Naive thymus-derived CD8-positive, alpha-beta T cell (primary cell): ENCODE measurements at regions of chr16 and their contacts with region 1.

Region 1: GRCh38 chr16:89115216-89115861 is 21.7 kb downstream of the ACSF3 start:
- DNase-seq: peak; percentile 78 to 97 (median 92)
- ATAC-seq: peak; percentile 89 to 90
- H3K4me3 Mint-ChIP-seq: peak overlapping the region; percentile 77 to 96 (median 87)
- H3K27ac Mint-ChIP-seq: peak overlapping the region; percentile 95 to 100 (median 99)
- H3K4me1 Mint-ChIP-seq: peaks cover 18 to 58% (median 50%) of the 10 kb centered on the region in 4 donors
- H3K27me3 Mint-ChIP-seq: no peaks in the 10 kb centered on the region

Region 2: GRCh38 chr16:89099905-89100304 is 15.4 kb before region 1 on chr16:
- POLR2A ChIA-PET with region 1: interaction called, 51 read pairs
- DNase-seq: peak in 1 of 10 donors; percentile 45
- ATAC-seq: no peak
- H3K4me3 Mint-ChIP-seq: peak overlapping the region in 1 of 10 donors; percentile 53
- H3K27ac Mint-ChIP-seq: peak overlapping the region in 6 of 10 donors; percentile 49 to 94 (median 70)
- H3K4me1 Mint-ChIP-seq: peaks cover 28 to 73% (median 52%) of the 10 kb centered on the region in 4 donors
- H3K27me3 Mint-ChIP-seq: no peaks in the 10 kb centered on the region